SK-N-SH (cell line): ENCODE measurements at regions of chr1 and their contacts with region 1.

Region 1: DNA sequence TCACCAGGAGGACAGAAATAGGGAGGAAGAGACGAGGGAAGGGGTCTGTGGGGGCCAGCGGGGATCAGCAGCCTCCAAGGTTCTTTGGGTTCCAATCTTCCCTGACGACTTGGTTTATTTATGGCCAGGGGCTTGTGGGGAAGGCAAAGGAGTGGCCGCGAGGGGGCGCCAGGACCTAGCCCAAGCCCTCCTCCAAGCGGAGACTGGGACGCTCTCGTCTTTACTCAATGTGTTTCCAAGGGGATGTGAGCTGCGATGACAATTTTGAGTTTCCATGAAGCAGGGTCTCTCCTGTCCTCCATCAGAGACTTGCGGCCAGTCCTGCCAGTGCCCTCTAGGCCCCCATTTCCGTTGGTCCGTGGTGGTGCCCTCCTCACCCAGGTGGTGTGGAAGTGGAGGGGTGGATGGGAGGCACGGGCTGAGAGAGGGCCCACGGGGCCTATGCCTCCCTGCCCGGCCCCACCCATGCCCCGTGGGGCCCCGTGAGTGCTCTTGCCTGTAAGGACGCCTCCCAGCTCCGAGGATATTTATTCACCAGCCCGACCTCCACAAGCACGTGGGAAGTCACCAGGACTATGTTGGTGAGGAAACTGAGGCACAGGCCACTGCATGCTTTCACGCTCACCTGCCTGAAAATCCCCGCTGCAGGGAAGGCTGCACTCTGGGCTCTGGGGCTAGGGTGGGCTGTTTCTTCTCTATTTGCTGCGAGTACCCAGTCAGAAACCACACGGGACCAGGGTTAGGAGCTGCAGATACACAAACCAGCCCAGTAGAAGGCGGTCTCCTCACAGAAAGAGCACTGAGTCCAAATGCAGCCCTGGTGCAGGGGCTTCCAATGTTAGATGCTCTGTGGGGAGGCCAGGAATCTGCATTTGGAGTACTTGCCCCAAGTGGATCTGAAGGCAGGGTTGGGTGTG is 26.5 kb downstream of the DMRTB1 start:
- DNase-seq: peak; percentile 92
- H3K4me3 ChIP-seq: peak overlapping the region in 1 of 2 experiments; percentile 38; a peak in 1 of 4 replicates
- H3K27ac ChIP-seq: no peak overlapping the region
- H3K4me1 ChIP-seq: peaks cover 0 to 19% of the 10 kb centered on the region in 2 experiments; a peak in 1 of 4 replicates
- H3K27me3 ChIP-seq: no peaks in the 10 kb centered on the region; the same call in 1 of the 2 replicates
- CTCF ChIP-seq: peak; percentile 93
- EP300 ChIP-seq: no peak
- RAD21 ChIP-seq: peak; percentile 98

Region 2: GRCh38 chr1:53450225-53450624 is 35.5 kb before region 1 on chr1:
- CTCF ChIA-PET with region 1: interaction called, 13 read pairs
- POLR2A ChIA-PET with region 1: no interaction called
- DNase-seq: peak; percentile 62
- H3K4me3 ChIP-seq: no peak overlapping the region
- H3K27ac ChIP-seq: no peak overlapping the region
- H3K4me1 ChIP-seq: peaks cover 0 to 11% of the 10 kb centered on the region in 2 experiments; a peak in 1 of 4 replicates
- H3K27me3 ChIP-seq: no peaks in the 10 kb centered on the region
- CTCF ChIP-seq: peak; percentile 55
- EP300 ChIP-seq: no peak
- RAD21 ChIP-seq: peak; percentile 63

Region 3: DNA sequence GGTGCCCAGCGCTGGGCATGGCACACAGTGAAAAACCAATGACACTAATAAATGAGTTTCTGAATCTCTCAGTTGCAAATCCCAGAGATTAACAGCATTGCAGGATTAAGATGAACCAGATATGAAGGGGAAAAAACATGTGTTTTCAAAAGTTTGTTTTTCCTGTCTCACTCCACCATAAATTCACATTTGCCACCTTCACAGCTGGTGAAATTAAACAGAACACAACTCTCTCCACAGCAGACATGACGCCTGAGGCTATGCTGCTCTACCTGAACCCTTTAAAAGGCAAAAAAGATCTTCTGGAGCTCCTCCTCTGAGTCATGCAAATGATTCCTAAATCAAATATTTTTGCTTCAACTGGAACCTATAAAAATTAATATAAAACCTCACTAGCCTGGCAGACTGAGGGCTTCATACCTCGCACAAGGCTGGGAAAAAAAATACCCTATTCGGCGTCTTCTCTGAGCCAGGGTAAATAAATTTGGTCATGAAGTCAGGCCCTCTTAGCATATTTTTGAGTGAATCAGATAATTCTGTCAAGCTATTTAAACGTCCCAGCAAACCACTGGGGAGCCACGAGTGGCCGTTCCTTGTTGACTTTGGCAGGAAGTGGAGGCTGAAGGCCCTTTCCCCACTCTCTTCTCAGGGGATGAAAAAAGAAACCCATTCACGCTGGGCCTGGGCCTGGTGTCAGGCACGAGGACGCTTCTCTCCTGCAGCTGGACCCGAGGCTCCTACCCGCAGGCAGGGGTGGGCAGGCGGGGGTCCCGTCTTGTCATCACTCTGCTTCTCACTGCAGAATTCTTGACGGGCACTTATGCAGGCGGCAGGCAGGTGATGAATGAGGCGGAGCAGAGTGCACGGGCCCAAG is 26.4 kb after region 1 on chr1:
- CTCF ChIA-PET with region 1: interaction called, 33 read pairs
- POLR2A ChIA-PET with region 1: no interaction called
- DNase-seq: peak; percentile 75
- H3K4me3 ChIP-seq: no peak overlapping the region
- H3K27ac ChIP-seq: peak overlapping the region; percentile 76 to 97
- H3K4me1 ChIP-seq: peaks cover 16 to 68% of the 10 kb centered on the region in 2 experiments; a peak in 3 of 4 replicates
- H3K27me3 ChIP-seq: no peaks in the 10 kb centered on the region
- CTCF ChIP-seq: no peak
- EP300 ChIP-seq: peak in 1 of 2 experiments; percentile 92; a peak in 2 of 4 replicates
- RAD21 ChIP-seq: no peak

Region 4: DNA sequence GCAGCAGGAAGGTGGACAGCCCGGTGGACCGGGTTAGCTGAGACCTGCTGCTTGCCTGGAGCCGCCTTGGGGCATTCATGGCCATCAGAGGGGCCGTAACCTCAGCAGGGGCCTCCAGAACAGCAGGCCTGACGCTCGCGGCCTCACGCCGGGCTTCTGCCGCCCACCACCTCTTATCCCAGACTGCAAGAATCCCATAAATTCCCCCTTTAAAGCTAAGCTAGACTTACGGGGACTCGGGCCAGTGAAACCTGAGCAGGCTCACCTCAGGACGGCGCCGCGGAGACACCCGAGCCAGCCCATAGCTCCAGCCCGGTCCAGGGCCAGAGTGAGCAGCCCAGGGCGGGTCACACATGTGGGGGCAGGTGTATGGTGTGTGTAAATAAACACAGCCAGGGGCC is 120.9 kb after region 1 on chr1:
- CTCF ChIA-PET with region 1: interaction called, 12 read pairs
- POLR2A ChIA-PET with region 1: no interaction called
- DNase-seq: peak; percentile 24
- H3K4me3 ChIP-seq: no peak overlapping the region
- H3K27ac ChIP-seq: no peak overlapping the region
- H3K4me1 ChIP-seq: peaks cover 0 to 7% of the 10 kb centered on the region in 2 experiments; a peak in 1 of 4 replicates
- H3K27me3 ChIP-seq: no peaks in the 10 kb centered on the region
- CTCF ChIP-seq: no peak
- EP300 ChIP-seq: no peak
- RAD21 ChIP-seq: no peak

Region 5: GRCh38 chr1:53681977-53682685 is 196.4 kb after region 1 on chr1:
- CTCF ChIA-PET with region 1: interaction called, 131 read pairs
- POLR2A ChIA-PET with region 1: no interaction called
- DNase-seq: peak; percentile 79
- H3K4me3 ChIP-seq: no peak overlapping the region
- H3K27ac ChIP-seq: peak overlapping the region in 1 of 2 experiments; percentile 88; a peak in 2 of 4 replicates
- H3K4me1 ChIP-seq: peaks cover 15 to 85% of the 10 kb centered on the region in 2 experiments; a peak in 2 of 4 replicates
- H3K27me3 ChIP-seq: no peaks in the 10 kb centered on the region
- CTCF ChIP-seq: peak; percentile 56
- EP300 ChIP-seq: no peak
- RAD21 ChIP-seq: peak; percentile 81

Region 6: GRCh38 chr1:53739109-53739681 is 253.5 kb after region 1 on chr1 and contains the start of gene GLIS1:
- CTCF ChIA-PET with region 1: interaction called, 11 read pairs
- POLR2A ChIA-PET with region 1: no interaction called
- DNase-seq: peak; percentile 100
- H3K4me3 ChIP-seq: peak within 1 kb of the TSS; percentile 54 to 73
- H3K27ac ChIP-seq: no peak within 1 kb of the TSS; a peak in 1 of 4 replicates
- H3K4me1 ChIP-seq: peaks cover 8 to 14% of the 10 kb centered on the region in 2 experiments; a peak in 3 of 4 replicates
- H3K27me3 ChIP-seq: no peaks in the 10 kb centered on the region
- CTCF ChIP-seq: no peak
- EP300 ChIP-seq: no peak
- RAD21 ChIP-seq: no peak
- polyA plus RNA-seq, gene GLIS1: 0.05 and 0.13 TPM in 2 replicates